ENCODE measurements at regions of chrX and their contacts with region 1.

Region 1: GRCh38 chrX:153763989-153764755 is at the start of gene PLXNB3:
- DNase-seq: peak; percentile 68 to 95
- H3K4me3 ChIP-seq: peak within 1 kb of the TSS; percentile 52; the same call in 1 of the 2 replicates
- H3K27ac ChIP-seq: no peak within 1 kb of the TSS
- H3K4me1 ChIP-seq: peaks cover 7% of the 10 kb centered on the region; the same call in 1 of the 2 replicates
- H3K27me3 ChIP-seq: no peaks in the 10 kb centered on the region
- CTCF ChIP-seq: peak; percentile 86
- total RNA-seq, gene PLXNB3: 39.4 and 41.4 TPM in 2 replicates

Region 2: GRCh38 chrX:153530411-153531129 is 233.6 kb before region 1 on chrX:
- CTCF ChIA-PET with region 1: no interaction called
- POLR2A ChIA-PET with region 1: no interaction called
- intact Hi-C with region 1: no loop called
- DNase-seq: no peak
- H3K4me3 ChIP-seq: no peak overlapping the region
- H3K27ac ChIP-seq: no peak overlapping the region
- H3K4me1 ChIP-seq: no peaks in the 10 kb centered on the region
- H3K27me3 ChIP-seq: peaks cover 20% of the 10 kb centered on the region
- CTCF ChIP-seq: no peak

Region 3: DNA sequence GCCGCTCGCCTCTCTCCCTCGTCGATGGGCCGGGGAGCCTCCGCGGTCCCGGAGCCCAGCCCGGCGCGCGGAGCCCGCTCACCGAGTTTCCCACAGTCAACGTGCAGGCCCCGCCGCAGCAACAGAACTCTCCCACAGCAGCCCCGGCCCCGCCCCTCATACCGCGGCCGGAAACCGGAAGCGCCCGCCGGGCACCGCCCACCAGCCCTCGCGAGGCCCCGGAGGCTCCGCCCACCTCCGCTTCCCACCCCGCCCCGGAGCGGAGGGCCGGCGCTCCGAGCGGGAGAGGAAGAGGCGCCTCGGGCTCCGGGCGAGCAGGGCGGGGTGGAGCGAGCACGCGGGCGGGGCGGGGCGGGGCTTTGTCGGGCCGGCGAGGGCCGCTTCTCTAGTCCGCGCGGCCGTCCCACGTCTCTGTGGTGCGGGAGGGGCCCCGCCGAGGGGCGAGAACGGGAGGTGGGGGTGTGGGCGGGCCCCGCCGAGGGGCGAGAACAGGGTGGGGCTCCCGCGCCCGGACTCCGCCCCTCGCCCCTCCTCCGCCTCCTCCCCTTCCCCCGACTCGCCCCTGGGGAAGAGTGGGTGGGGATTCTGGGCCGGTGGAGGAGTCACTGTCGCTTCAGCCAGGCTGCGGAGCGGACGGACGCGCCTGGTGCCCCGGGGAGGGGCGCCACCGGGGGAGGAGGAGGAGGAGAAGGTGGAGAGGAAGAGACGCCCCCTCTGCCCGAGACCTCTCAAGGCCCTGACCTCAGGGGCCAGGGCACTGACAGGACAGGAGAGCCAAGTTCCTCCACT is 39.7 kb before region 1 on chrX and contains the starts of genes ABCD1 and BCAP31:
- CTCF ChIA-PET with region 1: no interaction called
- POLR2A ChIA-PET with region 1: interaction called, 4 read pairs
- intact Hi-C with region 1: loop called (anchors 1 kb)
- DNase-seq: peak; percentile 76 to 97
- H3K4me3 ChIP-seq: peak within 1 kb of the TSS; percentile 85
- H3K27ac ChIP-seq: peak within 1 kb of the TSS; percentile 91
- H3K4me1 ChIP-seq: peaks cover 34% of the 10 kb centered on the region
- H3K27me3 ChIP-seq: no peaks in the 10 kb centered on the region
- CTCF ChIP-seq: no peak
- total RNA-seq, gene ABCD1: 40.0 and 44.9 TPM in 2 replicates
- total RNA-seq, gene BCAP31: 522 and 541 TPM in 2 replicates

Region 4: GRCh38 chrX:153744214-153744724 is 19.9 kb before region 1 on chrX:
- CTCF ChIA-PET with region 1: no interaction called
- POLR2A ChIA-PET with region 1: no interaction called
- intact Hi-C with region 1: no loop called
- DNase-seq: no peak
- H3K4me3 ChIP-seq: no peak overlapping the region
- H3K27ac ChIP-seq: no peak overlapping the region
- H3K4me1 ChIP-seq: no peaks in the 10 kb centered on the region
- H3K27me3 ChIP-seq: no peaks in the 10 kb centered on the region
- CTCF ChIP-seq: no peak

Region 5: DNA sequence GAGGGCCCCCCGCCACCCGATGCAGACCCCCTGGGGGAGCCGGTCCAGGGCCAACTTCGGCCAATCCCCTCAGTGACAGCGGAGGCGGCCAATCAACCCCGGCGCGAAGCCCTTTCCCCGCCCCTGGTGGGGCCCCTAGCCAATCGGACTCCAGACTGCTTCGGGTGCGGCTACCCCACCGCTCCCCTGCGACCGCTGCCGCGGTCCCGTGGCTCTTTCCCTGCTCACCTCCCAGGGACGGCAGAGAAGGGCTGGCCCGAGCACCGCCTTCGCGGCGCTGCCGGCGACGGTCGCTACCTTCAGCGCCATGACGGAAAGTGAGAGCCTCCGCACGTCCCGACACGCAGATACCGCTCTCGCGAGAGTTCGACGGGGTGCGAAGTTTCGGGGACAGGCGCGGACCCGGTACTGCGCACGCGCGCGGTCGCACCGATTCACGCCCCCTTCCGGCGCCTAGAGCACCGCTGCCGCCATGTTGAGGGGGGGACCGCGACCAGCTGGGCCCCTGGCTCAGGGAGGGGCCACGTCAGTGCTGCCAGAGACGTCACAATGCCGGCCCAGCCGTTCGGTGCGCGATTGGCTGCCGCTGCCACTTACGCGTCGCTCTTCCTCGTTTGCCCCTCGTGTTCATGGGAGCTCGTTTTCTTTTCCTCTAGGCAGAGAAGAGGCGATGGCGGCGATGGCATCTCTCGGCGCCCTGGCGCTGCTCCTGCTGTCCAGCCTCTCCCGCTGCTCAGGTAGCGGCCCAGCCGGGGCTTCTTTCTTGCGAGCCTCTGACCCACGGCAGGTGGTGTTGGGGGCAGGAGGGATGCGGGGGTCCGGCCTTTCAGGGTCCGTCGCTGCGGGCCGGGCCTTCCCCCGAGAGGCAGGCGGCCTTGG is 30.1 kb after region 1 on chrX and contains the starts of genes IDH3G and SSR4:
- CTCF ChIA-PET with region 1: no interaction called
- POLR2A ChIA-PET with region 1: no interaction called
- intact Hi-C with region 1: loop called (anchors 1 kb)
- DNase-seq: peak; percentile 86 to 97
- H3K4me3 ChIP-seq: peak within 1 kb of the TSS; percentile 93
- H3K27ac ChIP-seq: peak within 1 kb of the TSS; percentile 58
- H3K4me1 ChIP-seq: peaks cover 15% of the 10 kb centered on the region; the same call in 1 of the 2 replicates
- H3K27me3 ChIP-seq: no peaks in the 10 kb centered on the region
- CTCF ChIP-seq: no peak; the same call in 1 of the 2 replicates
- total RNA-seq, gene IDH3G: 47.7 and 63.4 TPM in 2 replicates
- total RNA-seq, gene SSR4: 223 and 310 TPM in 2 replicates

Region 6: GRCh38 chrX:153900831-153901752 is 136.9 kb after region 1 on chrX:
- CTCF ChIA-PET with region 1: interaction called, 17 read pairs
- POLR2A ChIA-PET with region 1: interaction called, 9 read pairs
- intact Hi-C with region 1: no loop called
- DNase-seq: peak; percentile 79 to 83
- H3K4me3 ChIP-seq: no peak overlapping the region
- H3K27ac ChIP-seq: 0 out of 2 replicates have a peak overlapping the region, but pooled peaks have one; percentile 16
- H3K4me1 ChIP-seq: peaks cover 25% of the 10 kb centered on the region
- H3K27me3 ChIP-seq: no peaks in the 10 kb centered on the region
- CTCF ChIP-seq: no peak

Region 7: DNA sequence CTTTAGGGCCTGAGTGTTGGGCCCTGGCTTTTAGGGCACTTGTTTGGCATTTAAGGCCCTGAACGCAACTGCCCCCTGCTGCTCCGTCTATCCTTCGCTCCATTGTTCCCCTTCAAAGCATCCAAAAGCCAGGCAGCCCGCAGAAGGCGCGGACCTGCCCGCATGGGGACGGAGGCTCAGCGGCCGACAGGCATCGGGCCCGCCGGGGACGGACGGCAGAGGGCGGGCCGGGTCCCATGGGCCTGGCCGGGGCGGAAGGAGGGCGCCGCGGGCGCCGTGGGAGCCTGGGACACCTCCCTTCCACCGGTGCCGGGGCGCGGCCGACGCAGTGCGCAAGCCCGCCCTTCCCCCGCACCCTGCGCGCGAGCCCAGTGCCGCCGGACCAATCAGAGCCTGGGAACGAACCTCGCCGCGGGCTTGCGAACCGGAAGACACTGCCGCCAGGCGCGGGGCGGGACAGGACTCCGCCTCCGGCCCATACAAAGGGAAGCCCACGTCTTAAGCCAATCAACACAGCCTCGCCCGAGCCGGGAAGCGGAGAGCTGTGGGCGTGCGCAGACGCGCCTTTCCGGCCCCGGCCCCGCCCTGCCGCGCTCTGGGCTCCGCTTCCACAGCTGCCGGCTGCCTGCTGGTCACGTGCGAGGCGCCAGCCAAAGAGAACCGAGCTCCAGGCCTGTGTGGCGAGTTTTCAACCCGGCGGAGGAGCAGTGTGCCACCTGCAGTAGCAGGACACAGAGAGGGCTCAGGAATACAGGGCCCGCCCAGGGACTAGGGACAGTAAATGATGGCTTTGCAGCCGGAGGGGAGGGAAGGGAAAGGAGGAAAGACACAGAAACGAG is 164.0 kb after region 1 on chrX:
- CTCF ChIA-PET with region 1: no interaction called
- POLR2A ChIA-PET with region 1: interaction called, 4 read pairs
- intact Hi-C with region 1: loop called (anchors 1 kb)
- DNase-seq: peak; percentile 92 to 99
- H3K4me3 ChIP-seq: peak overlapping the region; percentile 86
- H3K27ac ChIP-seq: peak overlapping the region; percentile 86
- H3K4me1 ChIP-seq: peaks cover 17% of the 10 kb centered on the region; the same call in 1 of the 2 replicates
- H3K27me3 ChIP-seq: no peaks in the 10 kb centered on the region
- CTCF ChIP-seq: no peak; the same call in 1 of the 2 replicates

Region 8: DNA sequence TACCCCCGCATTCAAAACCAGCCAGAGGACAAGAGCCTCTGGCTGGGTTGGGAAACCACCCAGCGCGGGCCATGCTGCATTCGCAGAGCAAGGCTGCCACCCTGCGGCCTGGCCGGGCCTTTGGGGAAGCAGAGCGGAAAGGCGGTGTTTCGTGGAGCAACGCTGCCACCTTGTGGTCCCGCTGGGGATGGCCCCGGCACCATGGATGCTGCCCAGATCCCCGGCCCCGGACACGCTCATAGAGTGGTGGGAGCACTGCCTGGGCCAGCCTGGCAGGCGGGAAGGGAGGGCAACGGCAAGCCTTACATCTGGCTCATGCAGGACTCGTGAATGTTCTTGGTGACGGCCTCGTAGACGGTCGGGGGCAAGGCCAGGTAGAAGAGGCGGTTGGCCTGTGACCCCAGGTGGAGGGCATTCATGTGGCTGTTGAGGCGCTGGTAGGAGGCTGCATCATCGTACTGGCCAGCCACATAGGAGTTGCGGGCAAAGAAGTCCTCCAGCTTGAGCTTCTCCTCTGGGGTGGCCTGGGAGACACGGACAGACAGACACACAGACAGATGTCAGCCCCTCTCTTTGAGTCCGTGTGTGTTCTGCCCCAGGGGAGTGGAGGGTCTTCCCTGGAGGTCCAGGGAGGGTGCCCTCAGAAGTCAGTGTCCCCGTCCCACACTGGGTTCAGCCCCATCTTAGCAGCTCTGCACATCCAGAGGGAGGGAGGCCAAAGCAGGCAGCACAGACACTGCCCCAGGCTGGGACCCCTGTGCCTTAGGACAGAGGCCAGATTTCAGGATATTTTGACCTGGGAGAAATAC is 770.9 kb after region 1 on chrX:
- CTCF ChIA-PET with region 1: no interaction called
- POLR2A ChIA-PET with region 1: no interaction called
- intact Hi-C with region 1: loop called (anchors 5 kb)
- DNase-seq: peak; percentile 51 to 89
- H3K4me3 ChIP-seq: no peak overlapping the region
- H3K27ac ChIP-seq: no peak overlapping the region
- H3K4me1 ChIP-seq: peaks cover 26% of the 10 kb centered on the region
- H3K27me3 ChIP-seq: no peaks in the 10 kb centered on the region
- CTCF ChIP-seq: peak; percentile 85